Cardiac septum (tissue), 1 donor: ENCODE measurements at regions of chr6 and their contacts with region 1.

Region 1: DNA sequence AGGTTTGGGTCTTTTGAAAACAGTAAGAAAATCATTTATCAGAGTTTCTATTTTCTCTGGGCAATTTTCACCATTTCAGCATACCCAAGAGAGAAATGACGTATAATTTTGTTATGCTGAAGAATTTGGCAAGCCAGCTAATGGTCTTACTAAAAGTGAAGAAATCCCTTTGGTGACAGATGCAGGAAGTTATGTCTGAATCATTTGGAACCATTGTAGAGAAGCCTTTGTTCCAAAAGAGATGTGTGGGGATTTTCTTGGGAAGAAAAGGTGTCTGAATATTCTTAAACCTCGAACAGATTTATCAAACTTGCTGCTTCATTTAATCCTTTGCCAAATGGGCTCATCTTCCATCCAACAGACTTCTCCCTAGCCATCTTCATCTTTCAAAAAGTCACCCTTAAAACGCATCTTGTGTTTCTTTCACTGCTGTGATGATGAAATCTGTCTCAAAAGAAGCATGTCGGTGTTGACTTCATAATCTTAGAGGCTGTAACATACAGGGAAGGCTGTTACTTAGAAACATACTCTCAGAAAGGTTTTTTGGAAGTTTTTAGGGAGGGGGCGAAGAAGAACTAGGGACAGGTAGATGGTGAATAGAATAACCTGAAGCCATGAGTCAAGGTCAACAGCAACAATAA is 39.5 kb downstream of the CITED2 start:
- DNase-seq: no peak

Region 2: GRCh38 chr6:139219271-139219729 is 115.6 kb before region 1 on chr6:
- intact Hi-C with region 1: no loop called
- DNase-seq: peak; percentile 90

Region 3: GRCh38 chr6:139250296-139251044 is 84.5 kb before region 1 on chr6:
- intact Hi-C with region 1: loop called (anchors 10 kb)
- DNase-seq: peak; percentile 83